Ovary (tissue), 10 donors: ENCODE measurements at regions of chr6 and their contacts with region 1.

Region 1: GRCh38 chr6:43334466-43335095 is 26.0 kb upstream of the CRIP3 start:
- DNase-seq: no peak
- H3K4me3 ChIP-seq: no peak overlapping the region
- H3K27ac ChIP-seq: no peak overlapping the region
- H3K4me1 ChIP-seq: no peaks in the 10 kb centered on the region
- H3K27me3 ChIP-seq: no peaks in the 10 kb centered on the region
- CTCF ChIP-seq: peak in 1 of 3 donors; percentile 19
- EP300 ChIP-seq: no peak
- POLR2A ChIP-seq: no peak

Region 2: DNA sequence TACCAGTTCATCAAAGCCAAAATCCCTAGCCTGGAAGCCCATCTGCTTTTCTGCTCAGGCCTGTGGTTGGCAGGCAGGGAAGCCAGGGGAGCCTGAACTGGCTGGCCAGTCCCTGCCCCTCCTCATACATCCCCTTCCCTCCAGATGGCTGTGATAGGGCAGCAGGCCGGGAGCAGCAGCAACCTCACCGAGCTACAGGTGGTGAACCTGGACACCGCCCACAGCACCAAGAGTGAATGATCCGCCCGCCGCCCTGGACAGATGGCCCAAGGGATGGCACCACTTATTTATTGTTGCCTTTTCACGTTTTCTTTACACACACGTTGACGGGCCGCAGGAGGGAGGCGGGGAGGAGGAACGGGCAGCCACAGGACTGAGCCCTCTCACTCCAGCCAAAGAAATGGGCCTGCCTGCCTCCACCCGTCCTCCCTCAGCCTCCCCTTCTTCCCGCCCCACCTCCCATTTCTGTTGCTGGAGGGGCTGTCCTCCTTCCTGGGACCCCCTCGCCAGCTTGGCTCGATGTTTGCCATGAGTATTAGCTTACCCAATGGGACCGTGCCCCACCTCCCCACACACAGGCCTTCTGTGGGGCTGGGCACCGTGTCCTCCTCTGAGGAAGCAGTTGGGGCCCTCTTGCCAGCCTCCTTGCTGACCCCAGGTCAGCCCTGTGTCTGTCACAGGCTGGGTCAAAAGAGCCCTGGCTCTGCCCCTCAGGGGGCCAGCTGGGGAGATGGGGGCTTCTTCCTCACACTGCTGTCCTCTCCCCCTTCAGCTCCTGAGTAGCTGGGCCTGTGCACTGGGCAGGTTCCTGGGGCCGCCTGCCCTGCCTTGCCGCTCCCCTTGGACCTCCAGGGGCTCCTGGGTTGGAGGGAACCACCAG is 155.4 kb before region 1 on chr6:
- intact Hi-C with region 1: loop called in 1 of 4 experiments (anchors 1 kb)
- DNase-seq: no peak
- H3K4me3 ChIP-seq: no peak overlapping the region
- H3K27ac ChIP-seq: no peak overlapping the region
- H3K4me1 ChIP-seq: peaks cover 4% of the 10 kb centered on the region
- H3K27me3 ChIP-seq: no peaks in the 10 kb centered on the region
- CTCF ChIP-seq: no peak
- EP300 ChIP-seq: no peak
- POLR2A ChIP-seq: no peak

Region 3: GRCh38 chr6:43250992-43251373 is 83.6 kb before region 1 on chr6:
- intact Hi-C with region 1: loop called in 1 of 4 experiments (anchors 10 kb)
- DNase-seq: no peak
- H3K4me3 ChIP-seq: no peak overlapping the region
- H3K27ac ChIP-seq: no peak overlapping the region
- H3K4me1 ChIP-seq: peaks cover 4% of the 10 kb centered on the region
- H3K27me3 ChIP-seq: no peaks in the 10 kb centered on the region
- CTCF ChIP-seq: no peak
- EP300 ChIP-seq: no peak
- POLR2A ChIP-seq: no peak

Region 4: DNA sequence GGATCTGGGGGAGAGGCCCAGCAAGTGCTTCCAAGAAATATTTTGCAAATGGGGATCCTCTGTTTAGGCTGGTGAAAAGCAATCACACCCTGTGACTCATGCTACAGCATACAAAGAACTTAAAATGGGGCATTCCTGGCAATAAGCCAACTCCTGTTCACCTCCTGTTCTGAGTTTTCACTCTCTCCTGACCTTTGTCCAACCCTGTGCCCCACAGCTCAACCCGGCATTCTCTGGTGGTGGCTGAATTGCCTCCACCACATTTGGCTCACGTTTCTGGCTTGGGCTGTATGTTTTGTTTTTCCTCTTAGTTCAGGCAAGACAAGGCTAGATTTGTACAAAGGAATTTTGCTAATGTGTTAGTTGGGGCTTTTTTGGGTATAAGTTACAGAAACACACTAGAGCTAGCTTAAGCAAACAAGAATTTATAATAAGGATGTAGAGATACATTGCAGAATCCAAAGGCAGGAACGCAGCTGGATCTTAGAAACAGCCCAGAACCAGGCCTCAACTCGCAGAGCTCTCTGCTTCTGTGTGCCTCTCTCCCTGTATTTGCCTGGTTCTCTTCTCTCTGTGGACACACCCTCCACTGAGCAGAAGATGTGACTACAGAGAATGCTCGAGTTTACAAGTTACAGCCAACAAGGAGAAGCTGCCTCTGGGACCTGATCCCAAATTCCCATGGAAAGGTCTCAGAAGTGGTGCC is 102.1 kb after region 1 on chr6:
- intact Hi-C with region 1: no loop called
- DNase-seq: peak; percentile 68 to 86 (median 76)
- H3K4me3 ChIP-seq: no peak overlapping the region
- H3K27ac ChIP-seq: peak overlapping the region; percentile 4 to 65
- H3K4me1 ChIP-seq: peaks cover 22% of the 10 kb centered on the region
- H3K27me3 ChIP-seq: no peaks in the 10 kb centered on the region
- CTCF ChIP-seq: no peak
- EP300 ChIP-seq: no peak
- POLR2A ChIP-seq: no peak

Region 5: DNA sequence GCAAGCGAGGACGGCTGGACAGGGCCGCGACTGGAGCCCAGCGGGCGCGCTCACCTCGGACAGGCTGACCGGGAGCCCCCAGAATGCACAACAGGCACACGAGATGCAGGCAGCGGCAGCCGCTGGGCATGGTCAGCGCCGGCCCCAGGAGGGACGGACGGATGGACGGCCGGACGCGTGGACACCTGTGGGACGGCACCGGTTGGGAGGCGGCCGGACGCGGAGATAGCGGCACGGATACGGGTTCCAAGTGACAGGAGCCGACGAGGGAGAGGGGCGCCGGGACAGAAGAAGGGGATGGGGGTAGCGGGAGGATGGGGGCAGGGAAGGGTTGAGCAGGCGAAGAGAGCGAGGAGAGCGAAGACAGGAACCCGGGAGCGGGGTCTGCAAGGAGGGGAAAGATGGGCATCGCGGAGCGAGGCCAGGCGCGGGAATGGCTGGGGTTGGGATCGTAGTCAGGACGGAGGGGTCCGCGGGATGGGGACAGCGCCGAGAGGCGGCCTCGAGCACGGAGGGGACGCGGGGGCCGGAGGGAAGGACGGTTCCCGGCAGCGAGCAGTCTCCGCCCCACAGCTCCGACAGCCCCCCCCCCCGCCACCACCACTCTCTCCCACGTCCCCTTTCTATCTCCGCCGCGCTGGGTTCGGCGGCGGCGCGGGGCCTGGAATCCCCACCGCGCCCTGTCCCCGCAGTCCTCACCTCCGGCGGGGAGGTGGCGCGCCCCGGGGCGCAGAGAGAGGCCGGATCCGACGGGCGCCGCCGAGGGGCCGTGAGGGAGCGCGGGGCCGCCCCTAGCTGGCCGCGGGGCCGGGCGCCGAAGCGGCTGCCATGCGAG is 120.3 kb after region 1 on chr6:
- intact Hi-C with region 1: no loop called
- DNase-seq: peak; percentile 75 to 92 (median 76)
- H3K4me3 ChIP-seq: peak overlapping the region; percentile 23
- H3K27ac ChIP-seq: no peak overlapping the region
- H3K4me1 ChIP-seq: peaks cover 1% of the 10 kb centered on the region
- H3K27me3 ChIP-seq: no peaks in the 10 kb centered on the region
- CTCF ChIP-seq: no peak
- EP300 ChIP-seq: no peak
- POLR2A ChIP-seq: no peak